ENCODE measurements at regions of chr1 and their contacts with region 1.

Region 1: DNA sequence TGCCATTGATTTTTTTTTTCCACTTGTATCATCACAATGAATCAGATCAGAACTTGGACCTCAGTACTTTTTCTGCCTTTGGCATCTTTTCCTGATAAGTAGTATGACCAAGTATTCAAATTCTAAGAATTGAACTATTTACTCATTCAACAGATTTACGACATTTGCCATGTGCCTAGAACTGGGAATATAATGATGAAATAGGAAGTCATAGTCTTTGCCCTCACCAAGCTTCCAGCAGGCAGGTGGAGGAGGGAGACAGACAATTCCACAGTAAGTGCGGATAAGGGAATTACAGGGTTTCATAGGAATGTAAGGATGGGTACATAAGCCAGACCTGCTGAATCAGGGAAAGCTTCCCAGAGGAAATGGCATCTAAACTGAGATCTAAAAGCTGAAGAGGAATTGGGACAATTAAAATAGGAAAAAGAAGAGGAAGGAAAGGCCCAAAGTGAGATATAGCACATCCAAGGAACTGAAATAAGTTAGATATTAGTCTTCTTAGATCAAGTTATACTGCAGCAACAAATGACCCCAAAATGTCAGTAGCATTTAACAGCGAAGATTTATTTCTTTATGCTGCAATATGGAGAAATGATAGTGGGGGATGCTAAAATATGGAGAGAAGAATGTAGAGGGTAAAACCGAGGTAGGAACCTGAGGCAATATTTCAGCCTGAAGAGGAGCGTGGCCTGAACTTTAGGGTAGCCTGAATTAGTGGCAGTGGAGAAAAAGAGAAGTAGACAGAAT is 5.3 kb upstream of the DDX59 start:
- DNase-seq: no peak
- H3K4me3 ChIP-seq: no peak overlapping the region
- CTCF ChIP-seq: no peak

Region 2: DNA sequence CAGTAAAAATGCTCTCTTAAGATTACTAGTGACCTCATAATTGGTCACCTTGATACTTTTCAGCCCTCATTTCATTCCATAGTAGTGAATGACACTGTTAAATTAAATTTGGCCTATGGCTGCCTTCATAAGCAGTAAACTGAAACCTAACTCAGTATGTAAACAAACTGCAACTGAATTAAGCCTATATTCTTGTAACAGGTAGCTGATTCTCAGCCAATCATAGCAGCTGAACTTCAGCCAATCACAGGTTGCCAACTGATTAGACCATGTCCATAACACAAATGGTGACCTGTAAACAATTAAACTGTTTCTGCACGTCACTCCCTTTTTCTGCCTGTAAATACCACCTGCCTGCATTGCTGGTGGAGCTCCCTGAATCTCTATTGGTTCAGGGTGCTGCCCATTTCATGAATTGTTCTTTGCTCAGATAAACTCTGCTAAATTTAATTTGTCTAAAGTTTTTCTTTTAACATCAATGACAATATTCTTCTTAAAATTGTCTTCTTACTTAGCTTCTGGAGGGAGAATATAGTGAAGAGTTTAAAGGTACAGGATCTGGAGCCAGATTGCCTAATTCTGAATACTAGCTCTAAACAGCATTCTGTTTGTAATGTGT is 39.7 kb after region 1 on chr1:
- in situ Hi-C with region 1: loop called (anchors 5 kb)
- DNase-seq: no peak
- H3K4me3 ChIP-seq: no peak overlapping the region
- CTCF ChIP-seq: no peak